ENCODE measurements at regions of chr17 and their contacts with region 1.

Region 1: GRCh38 chr17:3695723-3696411 is at the start of gene P2RX5:
- DNase-seq: peak; percentile 81
- H3K4me3 ChIP-seq: peak within 1 kb of the TSS; percentile 44 to 58
- H3K27ac ChIP-seq: 0 out of 4 replicates have a peak within 1 kb of the TSS, but pooled peaks of 1 of the 2 experiments have one; percentile 3
- H3K4me1 ChIP-seq: peaks cover 0 to 13% of the 10 kb centered on the region in 2 experiments; a peak in 1 of 4 replicates
- H3K27me3 ChIP-seq: no peaks in the 10 kb centered on the region
- CTCF ChIP-seq: no peak
- EP300 ChIP-seq: no peak
- RAD21 ChIP-seq: no peak
- polyA plus RNA-seq, gene P2RX5: 0.71 and 0.97 TPM in 2 replicates

Region 2: GRCh38 chr17:3683054-3683511 is 12.8 kb before region 1 on chr17:
- CTCF ChIA-PET with region 1: interaction called, 28 read pairs
- POLR2A ChIA-PET with region 1: no interaction called
- DNase-seq: peak; percentile 90
- H3K4me3 ChIP-seq: peak overlapping the region in 1 of 2 experiments; percentile 19; a peak in 1 of 4 replicates
- H3K27ac ChIP-seq: no peak overlapping the region
- H3K4me1 ChIP-seq: no peaks in the 10 kb centered on the region
- H3K27me3 ChIP-seq: no peaks in the 10 kb centered on the region
- CTCF ChIP-seq: peak; percentile 90
- EP300 ChIP-seq: no peak
- RAD21 ChIP-seq: peak; percentile 62

Region 3: GRCh38 chr17:3835410-3836229 is 139.8 kb after region 1 on chr17:
- CTCF ChIA-PET with region 1: no interaction called
- POLR2A ChIA-PET with region 1: no interaction called
- DNase-seq: no peak
- H3K4me3 ChIP-seq: no peak overlapping the region
- H3K27ac ChIP-seq: no peak overlapping the region
- H3K4me1 ChIP-seq: no peaks in the 10 kb centered on the region
- H3K27me3 ChIP-seq: no peaks in the 10 kb centered on the region
- CTCF ChIP-seq: no peak
- EP300 ChIP-seq: no peak
- RAD21 ChIP-seq: no peak